Activated T-helper 2 cell treated with anti-CD3 and anti-CD28 coated beads, Interferon-gamma antibody, Interleukin-2, Interleukin-4, amounts not matched to agents 10 μg/mL and 5 μg/mL and 100 μg/mL, durations not matched to agents 14 hours and 24 hours and 36 hours (primary cell): ENCODE measurements at regions of chr12 and their contacts with region 1.

Region 1: DNA sequence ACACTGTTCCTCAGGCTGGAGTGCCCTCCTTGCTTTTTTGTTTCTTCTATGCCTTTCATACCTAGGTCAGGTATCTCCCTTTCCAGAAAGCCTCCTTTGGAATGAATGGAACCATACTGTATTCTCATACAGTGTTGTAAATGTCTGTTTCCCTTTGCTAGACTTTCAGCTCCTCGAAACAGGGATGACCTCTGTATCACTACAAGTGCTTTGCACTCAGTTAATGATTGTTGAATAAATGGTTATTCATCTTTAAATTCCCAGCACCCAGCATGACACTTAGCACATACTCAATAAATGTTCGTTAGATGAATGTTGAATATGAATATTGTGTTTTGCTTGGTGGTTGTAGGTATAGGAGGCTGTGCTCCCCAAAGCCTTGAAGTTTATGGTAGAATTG is 5.9 kb upstream of the TULP3 start:
- DNase-seq: no peak
- H3K4me3 Mint-ChIP-seq: no peak overlapping the region
- H3K27ac Mint-ChIP-seq: peak overlapping the region; percentile 38
- H3K4me1 Mint-ChIP-seq: peaks cover 20% of the 10 kb centered on the region
- H3K27me3 Mint-ChIP-seq: no peaks in the 10 kb centered on the region

Region 2: DNA sequence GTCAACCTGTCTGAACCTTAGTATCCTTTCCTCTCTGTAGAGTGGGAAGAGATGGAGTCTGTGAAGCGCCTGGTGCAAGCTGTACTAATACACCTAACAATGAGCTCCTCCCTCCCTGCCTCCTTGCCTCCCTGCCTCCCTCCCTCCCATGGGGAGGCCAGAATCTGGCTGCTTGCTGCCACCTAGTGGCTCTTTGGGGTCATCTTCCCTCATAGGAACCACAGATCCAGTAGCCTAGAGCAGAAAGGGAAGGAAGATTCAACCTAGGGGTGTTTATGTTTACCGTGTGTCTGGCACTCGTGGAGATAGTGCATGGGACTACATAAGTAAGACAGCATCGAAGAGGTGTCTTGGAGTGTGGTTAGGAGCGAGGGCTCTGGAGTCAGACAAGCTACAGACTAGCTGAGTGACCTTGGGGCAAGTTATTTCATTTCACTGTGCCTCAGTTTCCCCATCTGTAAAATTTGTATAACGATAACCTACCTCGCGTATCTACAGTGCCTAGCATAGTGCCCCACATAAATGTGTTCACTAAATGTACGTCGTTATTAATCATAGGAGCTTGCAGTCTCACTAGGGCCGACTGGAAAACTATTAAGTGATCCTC is 156.9 kb after region 1 on chr12:
- intact Hi-C with region 1: loop called (anchors 1 kb)
- DNase-seq: peak; percentile 41
- H3K4me3 Mint-ChIP-seq: no peak overlapping the region
- H3K27ac Mint-ChIP-seq: no peak overlapping the region
- H3K4me1 Mint-ChIP-seq: no peaks in the 10 kb centered on the region
- H3K27me3 Mint-ChIP-seq: peaks cover 5% of the 10 kb centered on the region